Activated CD4-positive, alpha-beta T cell treated with anti-CD3 and anti-CD28 coated beads, Interleukin-2, amount 10 ng/mL, durations not matched to agents 24 days and 14 days (primary cell): ENCODE measurements at regions of chr1 and their contacts with region 1.

Region 1: DNA sequence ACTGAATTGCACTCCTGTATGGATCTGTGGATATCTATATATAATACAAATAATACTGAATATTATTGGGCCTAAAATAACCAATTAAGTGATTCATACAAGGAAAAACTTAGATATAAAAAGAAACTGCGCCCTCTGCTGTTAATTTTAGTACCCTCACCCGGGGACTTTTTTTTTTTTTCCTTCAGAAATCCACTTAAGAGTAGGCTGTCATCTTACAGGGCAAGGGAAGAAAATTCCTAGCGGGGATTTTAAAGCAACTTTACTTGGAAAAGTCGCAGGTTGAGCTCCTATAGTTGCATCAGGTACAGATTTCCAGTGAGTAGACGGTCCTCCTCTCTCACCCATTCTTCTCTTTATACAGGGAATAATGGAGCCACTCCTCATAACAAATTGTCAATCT is 1.3 kb downstream of the NTNG1 start:
- DNase-seq: peak; percentile 60
- H3K4me3 Mint-ChIP-seq: peak overlapping the region; percentile 76
- H3K27ac Mint-ChIP-seq: no peak overlapping the region
- H3K4me1 Mint-ChIP-seq: peaks cover 14% of the 10 kb centered on the region
- H3K27me3 Mint-ChIP-seq: peaks cover 55% of the 10 kb centered on the region

Region 2: GRCh38 chr1:106960412-106960811 is 181.7 kb before region 1 on chr1:
- intact Hi-C with region 1: loop called (anchors 10 kb)
- DNase-seq: no peak
- H3K4me3 Mint-ChIP-seq: no peak overlapping the region
- H3K27ac Mint-ChIP-seq: no peak overlapping the region
- H3K4me1 Mint-ChIP-seq: no peaks in the 10 kb centered on the region
- H3K27me3 Mint-ChIP-seq: no peaks in the 10 kb centered on the region

Region 3: DNA sequence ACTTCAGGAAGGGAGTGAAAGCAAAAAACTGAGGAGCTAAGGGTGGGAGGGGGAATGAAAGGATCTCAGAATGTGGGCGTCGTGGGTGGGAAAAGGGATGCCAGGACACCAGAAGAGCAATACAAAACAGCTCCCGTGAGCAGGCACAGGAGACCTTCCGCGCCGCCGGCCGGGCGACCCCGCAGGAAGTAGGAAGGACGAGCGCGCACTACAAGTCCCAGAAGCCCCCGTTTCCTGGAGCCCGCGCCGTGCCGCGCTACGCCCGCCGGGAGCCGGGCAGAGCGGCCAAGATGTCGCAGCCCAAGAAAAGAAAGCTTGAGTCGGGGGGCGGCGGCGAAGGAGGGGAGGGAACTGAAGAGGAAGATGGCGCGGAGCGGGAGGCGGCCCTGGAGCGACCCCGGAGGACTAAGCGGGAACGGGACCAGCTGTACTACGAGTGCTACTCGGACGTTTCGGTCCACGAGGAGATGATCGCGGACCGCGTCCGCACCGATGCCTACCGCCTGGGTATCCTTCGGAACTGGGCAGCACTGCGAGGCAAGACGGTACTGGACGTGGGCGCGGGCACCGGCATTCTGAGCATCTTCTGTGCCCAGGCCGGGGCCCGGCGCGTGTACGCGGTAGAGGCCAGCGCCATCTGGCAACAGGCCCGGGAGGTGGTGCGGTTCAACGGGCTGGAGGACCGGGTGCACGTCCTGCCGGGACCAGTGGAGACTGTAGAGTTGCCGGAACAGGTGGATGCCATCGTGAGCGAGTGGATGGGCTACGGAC is 85.5 kb before region 1 on chr1 and contains the start of gene PRMT6:
- intact Hi-C with region 1: loop called (anchors 2 kb)
- DNase-seq: peak; percentile 96
- H3K4me3 Mint-ChIP-seq: peak within 1 kb of the TSS; percentile 99
- H3K27ac Mint-ChIP-seq: peak within 1 kb of the TSS; percentile 99
- H3K4me1 Mint-ChIP-seq: peaks cover 17% of the 10 kb centered on the region
- H3K27me3 Mint-ChIP-seq: peaks cover 3% of the 10 kb centered on the region
- total RNA-seq, gene PRMT6: 24.6 TPM in 2 replicates

Region 4: GRCh38 chr1:107110326-107110725 is 31.8 kb before region 1 on chr1:
- intact Hi-C with region 1: no loop called
- DNase-seq: no peak
- H3K4me3 Mint-ChIP-seq: no peak overlapping the region
- H3K27ac Mint-ChIP-seq: no peak overlapping the region
- H3K4me1 Mint-ChIP-seq: no peaks in the 10 kb centered on the region
- H3K27me3 Mint-ChIP-seq: no peaks in the 10 kb centered on the region